ENCODE measurements at regions of chr4 and their contacts with region 1.

Region 1: GRCh38 chr4:54433686-54434085 is 204.6 kb downstream of the PDGFRA start:
- DNase-seq: no peak
- ATAC-seq: no peak
- H3K4me3 ChIP-seq: no peak overlapping the region
- H3K27ac ChIP-seq: no peak overlapping the region
- H3K4me1 ChIP-seq: no peaks in the 10 kb centered on the region
- H3K27me3 ChIP-seq: no peaks in the 10 kb centered on the region
- CTCF ChIP-seq: peak; percentile 13 to 56 (median 36)
- POLR2A ChIP-seq: no peak

Region 2: DNA sequence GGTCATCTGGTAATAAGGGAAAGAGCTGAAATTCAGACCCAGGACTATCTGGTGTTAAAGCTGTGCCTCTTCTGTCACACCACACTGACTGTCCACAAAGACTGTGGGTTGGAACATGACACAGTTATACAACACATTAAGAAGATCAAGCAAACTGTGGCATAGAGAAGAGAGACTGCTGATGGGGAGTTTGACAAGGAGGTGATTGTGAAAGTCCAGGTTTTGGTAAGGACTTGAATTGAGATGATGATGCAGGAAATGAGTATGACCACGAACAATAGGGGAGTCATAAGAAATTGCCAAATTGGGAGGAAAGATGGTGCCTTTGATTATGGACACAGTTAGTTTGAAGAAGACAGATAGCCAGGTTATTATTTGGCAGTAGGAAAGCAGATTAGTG is 41.2 kb before region 1 on chr4:
- intact Hi-C with region 1: loop called in 2 of 10 experiments (anchors 5 to 10 kb)
- DNase-seq: no peak
- ATAC-seq: no peak
- H3K4me3 ChIP-seq: no peak overlapping the region
- H3K27ac ChIP-seq: no peak overlapping the region
- H3K4me1 ChIP-seq: no peaks in the 10 kb centered on the region
- H3K27me3 ChIP-seq: no peaks in the 10 kb centered on the region
- CTCF ChIP-seq: no peak
- POLR2A ChIP-seq: no peak